Endothelial cell of umbilical vein (primary cell): ENCODE measurements at regions of chr2 and their contacts with region 1.

Region 1: GRCh38 chr2:237165405-237166276 is 80.0 kb downstream of the COPS8 start:
- DNase-seq: peak; percentile 49
- H3K4me3 ChIP-seq: no peak overlapping the region
- H3K27ac ChIP-seq: no peak overlapping the region
- H3K4me1 ChIP-seq: no peaks in the 10 kb centered on the region
- H3K27me3 ChIP-seq: peaks cover 0 to 6% of the 10 kb centered on the region in 2 experiments
- CTCF ChIP-seq: peak; percentile 54 to 68
- POLR2A ChIP-seq: no peak

Region 2: GRCh38 chr2:237092920-237093781 is 72.5 kb before region 1 on chr2:
- CTCF ChIA-PET with region 1: interaction called, 26 read pairs
- POLR2A ChIA-PET with region 1: no interaction called
- dilution Hi-C with region 1: no loop called
- intact Hi-C with region 1: no loop called
- DNase-seq: peak; percentile 84
- H3K4me3 ChIP-seq: peak overlapping the region in 1 of 3 experiments; percentile 8
- H3K27ac ChIP-seq: peak overlapping the region; percentile 56
- H3K4me1 ChIP-seq: peaks cover 67% of the 10 kb centered on the region
- H3K27me3 ChIP-seq: no peaks in the 10 kb centered on the region
- CTCF ChIP-seq: peak; percentile 50 to 65
- POLR2A ChIP-seq: no peak

Region 3: DNA sequence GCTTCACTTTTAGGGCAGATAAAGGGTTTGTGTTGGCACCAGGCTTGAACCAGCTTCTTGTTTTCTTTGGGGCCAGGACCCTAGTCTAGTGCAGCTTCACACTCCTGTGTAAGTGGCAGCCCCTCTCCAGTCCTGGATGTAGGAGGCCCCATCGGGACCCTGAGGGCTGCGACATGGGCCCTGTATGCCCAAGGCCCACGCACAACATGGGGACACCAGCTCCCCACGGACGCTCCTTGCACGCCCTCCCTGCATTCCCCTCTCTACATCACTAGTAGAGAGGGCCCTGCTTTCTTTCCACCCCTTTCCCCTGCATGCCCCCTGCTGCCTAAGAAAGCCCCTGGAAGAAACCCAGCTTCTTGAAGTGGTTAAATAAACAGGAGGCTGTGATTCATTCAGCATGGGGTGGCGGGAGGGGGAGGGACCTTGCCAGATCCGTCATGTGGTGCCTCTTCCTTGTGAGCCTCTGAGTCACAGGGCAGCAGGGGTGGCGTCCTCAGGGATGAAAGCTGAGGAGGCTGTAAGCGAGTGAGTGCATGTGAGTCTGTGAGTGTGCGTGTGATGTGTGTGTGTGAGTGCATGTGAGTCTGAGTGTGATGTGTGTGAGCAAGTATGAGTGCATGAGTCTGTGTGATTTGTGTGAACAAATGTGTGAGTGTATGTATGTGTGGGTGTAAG is 37.5 kb before region 1 on chr2:
- CTCF ChIA-PET with region 1: interaction called, 11 read pairs
- POLR2A ChIA-PET with region 1: no interaction called
- dilution Hi-C with region 1: no loop called
- intact Hi-C with region 1: no loop called
- DNase-seq: peak; percentile 98
- H3K4me3 ChIP-seq: no peak overlapping the region
- H3K27ac ChIP-seq: peak overlapping the region; percentile 21
- H3K4me1 ChIP-seq: peaks cover 11% of the 10 kb centered on the region
- H3K27me3 ChIP-seq: no peaks in the 10 kb centered on the region
- CTCF ChIP-seq: peak; percentile 6 to 17
- POLR2A ChIP-seq: no peak

Region 4: GRCh38 chr2:237291138-237291792 is 125.6 kb after region 1 on chr2:
- CTCF ChIA-PET with region 1: interaction called, 13 read pairs
- POLR2A ChIA-PET with region 1: no interaction called
- dilution Hi-C with region 1: no loop called
- intact Hi-C with region 1: no loop called
- DNase-seq: peak; percentile 99
- H3K4me3 ChIP-seq: peak overlapping the region in 2 of 3 experiments; percentile 15 to 36
- H3K27ac ChIP-seq: peak overlapping the region; percentile 95
- H3K4me1 ChIP-seq: peaks cover 35% of the 10 kb centered on the region
- H3K27me3 ChIP-seq: no peaks in the 10 kb centered on the region
- CTCF ChIP-seq: no peak
- POLR2A ChIP-seq: no peak

Region 5: GRCh38 chr2:237413777-237414661 is 248.4 kb after region 1 on chr2 and contains the start of gene COL6A3:
- CTCF ChIA-PET with region 1: interaction called, 109 read pairs
- POLR2A ChIA-PET with region 1: no interaction called
- dilution Hi-C with region 1: no loop called
- intact Hi-C with region 1: loop called (anchors 1 kb)
- DNase-seq: no peak
- H3K4me3 ChIP-seq: no peak within 1 kb of the TSS
- H3K27ac ChIP-seq: no peak within 1 kb of the TSS
- H3K4me1 ChIP-seq: no peaks in the 10 kb centered on the region
- H3K27me3 ChIP-seq: peaks cover 7 to 15% of the 10 kb centered on the region in 2 experiments
- CTCF ChIP-seq: no peak
- POLR2A ChIP-seq: no peak
- total RNA-seq, gene COL6A3: not detected in 2 replicates